Naive thymus-derived CD4-positive, alpha-beta T cell (primary cell): ENCODE measurements at regions of chr13 and their contacts with region 1.

Region 1: GRCh38 chr13:75760131-75761021 is 124.2 kb downstream of the LMO7 start:
- DNase-seq: peak in 7 of 9 donors; percentile 29 to 60 (median 46)
- ATAC-seq: peak; percentile 75
- H3K4me3 ChIP-seq: peak overlapping the region; percentile 65
- H3K4me3 Mint-ChIP-seq: peak overlapping the region; percentile 79 to 96 (median 92)
- H3K27ac ChIP-seq: peak overlapping the region; percentile 78
- H3K27ac Mint-ChIP-seq: peak overlapping the region; percentile 86 to 99 (median 96)
- H3K4me1 ChIP-seq: peaks cover 30 to 32% of the 10 kb centered on the region in 2 donors
- H3K4me1 Mint-ChIP-seq: peaks cover 37 to 72% (median 68%) of the 10 kb centered on the region in 7 donors
- H3K27me3 ChIP-seq: no peaks in the 10 kb centered on the region
- H3K27me3 Mint-ChIP-seq: no peaks in the 10 kb centered on the region

Region 2: DNA sequence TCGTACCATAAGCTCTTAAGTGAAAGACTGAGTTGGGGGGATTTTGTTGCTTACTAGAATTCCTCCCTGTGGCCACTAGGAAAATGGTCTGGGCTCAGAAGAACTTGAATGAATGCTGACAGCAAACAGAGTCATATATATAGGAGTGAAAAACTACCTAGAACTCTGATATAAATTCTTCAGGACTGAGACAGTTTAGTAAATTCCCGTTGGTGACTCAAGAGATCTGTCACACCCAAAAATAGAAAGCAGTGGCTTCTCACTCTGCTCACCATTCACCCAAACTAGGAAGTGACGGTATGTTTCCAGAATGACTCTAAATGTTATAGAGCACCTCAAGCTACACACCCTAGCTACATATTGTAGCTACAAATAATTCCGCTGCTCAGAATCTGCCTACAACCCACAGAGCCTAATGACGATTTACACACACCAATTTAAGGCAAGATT is 394.6 kb before region 1 on chr13:
- CTCF ChIA-PET with region 1: no interaction called
- POLR2A ChIA-PET with region 1: no interaction called
- intact Hi-C with region 1: loop called in 1 of 2 experiments (anchors 5 kb)
- DNase-seq: peak in 1 of 9 donors; percentile 34
- ATAC-seq: peak; percentile 75
- H3K4me3 ChIP-seq: no peak overlapping the region
- H3K4me3 Mint-ChIP-seq: peak overlapping the region in 1 of 10 donors; percentile 72
- H3K27ac ChIP-seq: no peak overlapping the region
- H3K27ac Mint-ChIP-seq: peak overlapping the region in 1 of 9 donors; percentile 86
- H3K4me1 ChIP-seq: no peaks in the 10 kb centered on the region
- H3K4me1 Mint-ChIP-seq: peaks cover 0 to 25% (median 0%) of the 10 kb centered on the region in 7 donors
- H3K27me3 ChIP-seq: no peaks in the 10 kb centered on the region
- H3K27me3 Mint-ChIP-seq: peaks cover 0 to 8% (median 0%) of the 10 kb centered on the region in 5 donors

Region 3: GRCh38 chr13:75635828-75636435 is 124.4 kb before region 1 on chr13 and contains the start of gene LMO7:
- CTCF ChIA-PET with region 1: no interaction called
- POLR2A ChIA-PET with region 1: no interaction called
- intact Hi-C with region 1: loop called (anchors 2 to 5 kb)
- DNase-seq: peak; percentile 39 to 60 (median 44)
- ATAC-seq: peak; percentile 69
- H3K4me3 ChIP-seq: peak within 1 kb of the TSS; percentile 75
- H3K4me3 Mint-ChIP-seq: peak within 1 kb of the TSS; percentile 77 to 91 (median 85)
- H3K27ac ChIP-seq: peak within 1 kb of the TSS; percentile 34
- H3K27ac Mint-ChIP-seq: peak within 1 kb of the TSS; percentile 38 to 82 (median 71)
- H3K4me1 ChIP-seq: no peaks in the 10 kb centered on the region
- H3K4me1 Mint-ChIP-seq: peaks cover 7 to 23% (median 18%) of the 10 kb centered on the region in 7 donors
- H3K27me3 ChIP-seq: no peaks in the 10 kb centered on the region
- H3K27me3 Mint-ChIP-seq: peaks cover 0 to 21% (median 10%) of the 10 kb centered on the region in 5 donors
- total RNA-seq, gene LMO7: 18.0 to 68.1 (median 45.3) TPM

Region 4: DNA sequence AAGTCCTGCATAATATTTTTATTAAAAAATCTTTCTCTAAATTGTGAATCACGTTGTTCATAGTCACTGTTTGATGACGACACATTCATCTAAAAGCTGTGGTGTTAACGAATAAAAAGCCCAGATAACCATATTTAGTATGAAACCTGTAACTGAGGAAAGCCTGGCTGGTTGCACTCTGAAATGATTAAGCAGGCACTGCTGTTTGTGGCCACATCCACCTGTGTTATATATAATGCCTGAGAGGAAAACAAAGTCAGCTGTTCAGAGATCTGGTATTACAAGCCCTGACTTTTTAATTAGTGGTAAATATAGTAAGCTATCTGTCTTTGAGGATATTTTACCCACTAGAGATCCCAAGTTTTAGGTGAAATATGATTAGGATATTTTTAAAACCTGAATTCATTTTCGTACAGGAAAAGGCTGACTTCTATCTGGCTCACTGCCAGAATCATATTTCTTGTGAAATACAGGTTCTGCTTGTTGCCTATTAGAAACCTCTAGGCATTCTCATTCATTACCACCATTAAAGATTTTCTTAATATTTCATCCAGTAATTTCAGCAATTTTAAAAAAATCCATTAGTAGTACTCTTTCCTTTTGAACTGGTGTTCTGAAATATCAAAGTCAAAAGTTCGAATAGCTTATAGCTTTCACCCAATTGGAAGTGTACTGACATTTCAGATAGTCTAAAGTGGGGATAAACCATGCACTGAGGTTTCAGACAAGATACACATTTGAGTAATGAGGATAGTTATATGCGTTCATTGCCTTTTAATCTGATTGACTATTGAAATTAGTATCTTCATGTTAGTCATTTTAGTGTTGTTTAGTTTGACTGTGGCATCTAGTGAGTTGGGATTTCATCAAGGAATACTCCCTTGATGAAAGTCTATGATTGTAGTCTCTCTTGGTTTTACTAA is 44.5 kb before region 1 on chr13:
- CTCF ChIA-PET with region 1: no interaction called
- POLR2A ChIA-PET with region 1: no interaction called
- intact Hi-C with region 1: loop called in 1 of 2 experiments (anchors 5 kb)
- DNase-seq: peak in 2 of 9 donors; percentile 2 to 5
- ATAC-seq: no peak
- H3K4me3 ChIP-seq: no peak overlapping the region
- H3K4me3 Mint-ChIP-seq: no peak overlapping the region
- H3K27ac ChIP-seq: no peak overlapping the region
- H3K27ac Mint-ChIP-seq: no peak overlapping the region
- H3K4me1 ChIP-seq: no peaks in the 10 kb centered on the region
- H3K4me1 Mint-ChIP-seq: peaks cover 0 to 6% (median 0%) of the 10 kb centered on the region in 7 donors
- H3K27me3 ChIP-seq: no peaks in the 10 kb centered on the region
- H3K27me3 Mint-ChIP-seq: no peaks in the 10 kb centered on the region

Region 5: DNA sequence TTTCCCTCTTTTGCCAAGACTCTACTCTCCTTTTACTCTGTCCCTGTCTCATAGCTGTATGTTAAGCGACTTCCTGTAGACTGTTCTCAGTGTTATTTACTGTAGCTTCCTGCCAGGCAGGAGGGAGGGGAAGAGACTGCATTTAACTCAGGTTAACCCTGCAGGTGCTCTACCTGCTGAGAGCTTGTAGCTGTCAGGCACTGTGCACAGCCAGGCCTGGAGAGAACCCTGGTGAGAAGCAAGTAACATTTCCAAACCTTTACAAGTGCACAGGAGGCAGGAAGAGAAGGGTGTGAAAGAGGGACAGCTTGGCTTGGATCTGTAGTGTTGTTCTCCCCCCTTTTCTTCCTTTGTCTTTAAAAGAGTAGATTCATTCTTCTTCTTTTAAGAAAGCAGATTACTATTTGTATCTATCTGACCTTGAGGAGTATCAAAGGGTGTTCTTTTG is 42.8 kb after region 1 on chr13:
- CTCF ChIA-PET with region 1: interaction called, 7 read pairs
- POLR2A ChIA-PET with region 1: interaction called, 81 read pairs
- intact Hi-C with region 1: loop called (anchors 1 to 2 kb)
- DNase-seq: peak in 7 of 9 donors; percentile 40 to 68 (median 62)
- ATAC-seq: peak; percentile 95
- H3K4me3 ChIP-seq: peak overlapping the region; percentile 4
- H3K4me3 Mint-ChIP-seq: peak overlapping the region; percentile 4 to 85 (median 78)
- H3K27ac ChIP-seq: peak overlapping the region; percentile 60
- H3K27ac Mint-ChIP-seq: peak overlapping the region in 8 of 9 donors; percentile 88 to 97 (median 92)
- H3K4me1 ChIP-seq: peaks cover 0 to 33% of the 10 kb centered on the region in 2 donors
- H3K4me1 Mint-ChIP-seq: peaks cover 15 to 70% (median 49%) of the 10 kb centered on the region in 7 donors
- H3K27me3 ChIP-seq: no peaks in the 10 kb centered on the region
- H3K27me3 Mint-ChIP-seq: no peaks in the 10 kb centered on the region

Region 6: GRCh38 chr13:76016799-76017400 is 256.5 kb after region 1 on chr13:
- CTCF ChIA-PET with region 1: no interaction called
- POLR2A ChIA-PET with region 1: no interaction called
- intact Hi-C with region 1: loop called in 1 of 2 experiments (anchors 2 kb)
- DNase-seq: peak in 5 of 9 donors; percentile 2 to 21 (median 4)
- ATAC-seq: no peak
- H3K4me3 ChIP-seq: no peak overlapping the region
- H3K4me3 Mint-ChIP-seq: no peak overlapping the region
- H3K27ac ChIP-seq: no peak overlapping the region
- H3K27ac Mint-ChIP-seq: no peak overlapping the region
- H3K4me1 ChIP-seq: no peaks in the 10 kb centered on the region
- H3K4me1 Mint-ChIP-seq: peaks cover 0 to 11% (median 0%) of the 10 kb centered on the region in 7 donors
- H3K27me3 ChIP-seq: no peaks in the 10 kb centered on the region
- H3K27me3 Mint-ChIP-seq: peaks cover 0 to 5% (median 0%) of the 10 kb centered on the region in 5 donors

Region 7: GRCh38 chr13:76048675-76049375 is 288.4 kb after region 1 on chr13:
- CTCF ChIA-PET with region 1: no interaction called
- POLR2A ChIA-PET with region 1: no interaction called
- intact Hi-C with region 1: no loop called
- DNase-seq: no peak
- ATAC-seq: no peak
- H3K4me3 ChIP-seq: no peak overlapping the region
- H3K4me3 Mint-ChIP-seq: no peak overlapping the region
- H3K27ac ChIP-seq: no peak overlapping the region
- H3K27ac Mint-ChIP-seq: no peak overlapping the region
- H3K4me1 ChIP-seq: no peaks in the 10 kb centered on the region
- H3K4me1 Mint-ChIP-seq: no peaks in the 10 kb centered on the region
- H3K27me3 ChIP-seq: no peaks in the 10 kb centered on the region
- H3K27me3 Mint-ChIP-seq: peaks cover 0 to 33% (median 5%) of the 10 kb centered on the region in 5 donors

Region 8: GRCh38 chr13:77026818-77027585 is 1266.6 kb after region 1 on chr13 and contains the start of gene FBXL3:
- CTCF ChIA-PET with region 1: no interaction called
- POLR2A ChIA-PET with region 1: interaction called, 8 read pairs
- intact Hi-C with region 1: loop called in 1 of 2 experiments (anchors 2 kb)
- DNase-seq: peak; percentile 77 to 88 (median 84)
- ATAC-seq: peak; percentile 90
- H3K4me3 ChIP-seq: peak within 1 kb of the TSS; percentile 87
- H3K4me3 Mint-ChIP-seq: peak within 1 kb of the TSS; percentile 93 to 100 (median 98)
- H3K27ac ChIP-seq: peak within 1 kb of the TSS; percentile 100
- H3K27ac Mint-ChIP-seq: peak within 1 kb of the TSS; percentile 92 to 99 (median 94)
- H3K4me1 ChIP-seq: peaks cover 30 to 35% of the 10 kb centered on the region in 2 donors
- H3K4me1 Mint-ChIP-seq: peaks cover 36 to 61% (median 51%) of the 10 kb centered on the region in 7 donors
- H3K27me3 ChIP-seq: no peaks in the 10 kb centered on the region
- H3K27me3 Mint-ChIP-seq: peaks cover 0 to 6% (median 3%) of the 10 kb centered on the region in 5 donors
- total RNA-seq, gene FBXL3: 44.2 to 94.2 (median 70.8) TPM